ENCODE measurements at regions of chrX and their contacts with region 1.

Region 1: DNA sequence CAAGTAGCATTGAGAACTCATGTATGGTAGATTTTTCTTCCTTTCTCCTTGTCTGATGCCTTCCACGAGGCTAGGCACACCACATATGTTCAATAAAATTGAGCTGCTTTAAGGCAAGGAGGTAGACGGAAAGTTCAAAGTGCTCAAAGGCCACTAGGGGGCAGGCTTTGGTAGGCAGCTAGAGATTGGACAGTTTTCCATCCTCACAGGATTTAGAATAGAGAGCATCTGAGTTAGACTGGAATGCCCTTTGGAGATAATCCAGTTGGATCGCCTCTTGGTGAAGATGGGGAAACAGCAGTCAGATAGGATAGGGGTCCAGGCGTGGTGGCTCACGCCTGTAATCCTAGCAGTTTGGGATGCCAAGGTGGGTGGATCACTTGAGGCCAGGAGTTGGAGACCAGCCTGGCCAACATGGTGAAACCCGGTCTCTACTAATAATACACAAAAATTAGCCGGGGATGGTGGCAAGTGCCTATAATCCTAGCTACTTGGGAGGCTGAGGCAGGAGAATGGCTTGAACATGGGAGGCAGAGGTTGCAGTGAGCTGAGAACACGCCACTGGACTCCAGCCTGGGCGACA is 30.4 kb downstream of the ELF4 start:
- DNase-seq: no peak
- H3K4me3 ChIP-seq: no peak overlapping the region
- H3K27ac ChIP-seq: no peak overlapping the region
- H3K4me1 ChIP-seq: peaks cover 10 to 22% (median 14%) of the 10 kb centered on the region in 4 donors
- H3K27me3 ChIP-seq: no peaks in the 10 kb centered on the region
- CTCF ChIP-seq: peak; percentile 64 to 71 (median 67)
- EP300 ChIP-seq: no peak
- POLR2A ChIP-seq: no peak

Region 2: GRCh38 chrX:130024127-130024526 is 55.8 kb before region 1 on chrX:
- intact Hi-C with region 1: no loop called
- DNase-seq: peak; percentile 92
- H3K4me3 ChIP-seq: no peak overlapping the region
- H3K27ac ChIP-seq: peak overlapping the region in 2 of 4 donors; percentile 18 to 34
- H3K4me1 ChIP-seq: peaks cover 4 to 20% (median 17%) of the 10 kb centered on the region in 4 donors
- H3K27me3 ChIP-seq: no peaks in the 10 kb centered on the region
- CTCF ChIP-seq: no peak
- EP300 ChIP-seq: no peak
- POLR2A ChIP-seq: no peak

Region 3: GRCh38 chrX:130144509-130144908 is 64.6 kb after region 1 on chrX:
- intact Hi-C with region 1: no loop called
- DNase-seq: no peak
- H3K4me3 ChIP-seq: no peak overlapping the region
- H3K27ac ChIP-seq: no peak overlapping the region
- H3K4me1 ChIP-seq: no peaks in the 10 kb centered on the region
- H3K27me3 ChIP-seq: no peaks in the 10 kb centered on the region
- CTCF ChIP-seq: no peak
- EP300 ChIP-seq: no peak
- POLR2A ChIP-seq: no peak

Region 4: GRCh38 chrX:130196466-130196865 is 116.6 kb after region 1 on chrX:
- intact Hi-C with region 1: loop called (anchors 1 kb)
- DNase-seq: no peak
- H3K4me3 ChIP-seq: no peak overlapping the region
- H3K27ac ChIP-seq: no peak overlapping the region
- H3K4me1 ChIP-seq: no peaks in the 10 kb centered on the region
- H3K27me3 ChIP-seq: no peaks in the 10 kb centered on the region
- CTCF ChIP-seq: no peak
- EP300 ChIP-seq: no peak
- POLR2A ChIP-seq: no peak

Measured in esophagus muscularis mucosa (tissue), 4 donors.